CD14-positive monocyte (primary cell): ENCODE measurements at regions of chr13 and their contacts with region 1.

Region 1: GRCh38 chr13:20127577-20128466 is 33.0 kb downstream of the GJA3 start:
- DNase-seq: peak; percentile 41 to 73 (median 65)
- H3K4me3 ChIP-seq: peak overlapping the region; percentile 30 to 80 (median 43)
- H3K4me3 Mint-ChIP-seq: peak overlapping the region in 1 of 2 donors; percentile 74
- H3K27ac ChIP-seq: peak overlapping the region in 1 of 2 donors; percentile 31
- H3K27ac Mint-ChIP-seq: peak overlapping the region in 6 of 7 donors; percentile 72 to 94 (median 88)
- H3K4me1 ChIP-seq: peaks cover 25 to 32% of the 10 kb centered on the region in 2 donors
- H3K4me1 Mint-ChIP-seq: peaks cover 21% of the 10 kb centered on the region
- H3K27me3 ChIP-seq: peaks cover 16 to 35% of the 10 kb centered on the region in 2 donors
- H3K27me3 Mint-ChIP-seq: peaks cover 10 to 19% (median 10%) of the 10 kb centered on the region in 3 donors
- CTCF ChIP-seq: peak; percentile 55

Region 2: GRCh38 chr13:20073775-20074174 is 54.0 kb before region 1 on chr13:
- intact Hi-C with region 1: loop called in 1 of 2 experiments (anchors 10 kb)
- DNase-seq: peak; percentile 35 to 57 (median 50)
- H3K4me3 ChIP-seq: peak overlapping the region in 1 of 3 experiments; percentile 51
- H3K4me3 Mint-ChIP-seq: peak overlapping the region in 1 of 2 donors; percentile 42
- H3K27ac ChIP-seq: peak overlapping the region; percentile 62 to 73
- H3K27ac Mint-ChIP-seq: peak overlapping the region; percentile 52 to 85 (median 75)
- H3K4me1 ChIP-seq: peaks cover 19 to 24% of the 10 kb centered on the region in 2 donors
- H3K4me1 Mint-ChIP-seq: peaks cover 39% of the 10 kb centered on the region
- H3K27me3 ChIP-seq: no peaks in the 10 kb centered on the region
- H3K27me3 Mint-ChIP-seq: peaks cover 0 to 1% (median 0%) of the 10 kb centered on the region in 3 donors
- CTCF ChIP-seq: no peak

Region 3: DNA sequence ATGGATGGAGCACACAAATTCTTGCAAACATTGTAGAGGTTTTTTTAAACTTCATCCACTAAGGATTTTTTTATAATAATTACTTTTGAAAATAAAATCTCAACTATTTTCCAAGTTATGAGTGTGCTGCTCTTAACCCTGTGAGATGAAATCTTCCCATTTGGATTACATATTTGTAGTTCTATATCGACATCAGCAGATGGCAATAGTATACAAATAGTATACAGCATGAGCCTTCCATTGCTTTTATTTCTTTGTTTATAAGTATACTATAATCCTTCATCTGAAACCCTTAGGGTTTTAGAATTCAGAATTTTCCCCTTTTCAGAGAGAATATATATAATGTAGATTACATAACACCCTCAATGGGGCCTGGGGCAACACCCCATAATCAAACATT is 37.5 kb before region 1 on chr13:
- intact Hi-C with region 1: loop called in 1 of 2 experiments (anchors 5 kb)
- DNase-seq: no peak
- H3K4me3 ChIP-seq: no peak overlapping the region
- H3K4me3 Mint-ChIP-seq: no peak overlapping the region
- H3K27ac ChIP-seq: no peak overlapping the region
- H3K27ac Mint-ChIP-seq: no peak overlapping the region
- H3K4me1 ChIP-seq: no peaks in the 10 kb centered on the region
- H3K4me1 Mint-ChIP-seq: no peaks in the 10 kb centered on the region
- H3K27me3 ChIP-seq: peaks cover 6 to 17% of the 10 kb centered on the region in 2 donors
- H3K27me3 Mint-ChIP-seq: peaks cover 6 to 11% (median 9%) of the 10 kb centered on the region in 3 donors
- CTCF ChIP-seq: peak; percentile 37

Region 4: DNA sequence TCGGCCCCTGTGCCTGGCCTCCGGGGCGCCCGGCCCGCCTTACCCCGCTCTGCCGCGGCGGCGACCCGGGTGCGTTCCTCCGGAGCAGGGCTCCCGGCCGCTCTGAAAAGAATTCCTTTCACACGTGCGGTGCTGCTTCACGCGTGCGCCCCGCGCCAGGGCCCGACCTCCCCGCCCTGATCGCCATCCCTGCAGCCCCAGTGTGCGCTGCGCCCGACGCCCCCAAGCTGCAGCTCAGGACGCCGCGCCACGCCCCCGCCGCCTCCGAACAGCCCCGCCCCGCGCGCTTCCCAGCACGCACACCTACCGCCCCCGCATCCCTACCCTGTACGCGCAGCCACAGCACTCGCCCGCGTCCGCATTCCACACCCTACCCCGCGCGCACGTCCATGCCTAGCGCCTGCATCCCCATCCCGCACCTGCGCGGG is 33.0 kb after region 1 on chr13 and contains the start of gene GJA3:
- intact Hi-C with region 1: loop called in 1 of 2 experiments (anchors 5 kb)
- DNase-seq: no peak
- H3K4me3 ChIP-seq: peak within 1 kb of the TSS in 2 of 3 experiments; percentile 30 to 66
- H3K4me3 Mint-ChIP-seq: peak within 1 kb of the TSS; percentile 77 to 90
- H3K27ac ChIP-seq: no peak within 1 kb of the TSS
- H3K27ac Mint-ChIP-seq: peak within 1 kb of the TSS in 1 of 7 donors; percentile 68
- H3K4me1 ChIP-seq: peaks cover 13 to 23% of the 10 kb centered on the region in 2 donors
- H3K4me1 Mint-ChIP-seq: peaks cover 24% of the 10 kb centered on the region
- H3K27me3 ChIP-seq: peaks cover 67 to 73% of the 10 kb centered on the region in 2 donors
- H3K27me3 Mint-ChIP-seq: peaks cover 57 to 76% (median 68%) of the 10 kb centered on the region in 3 donors
- CTCF ChIP-seq: no peak
- polyA plus RNA-seq, gene GJA3: not detected

Region 5: DNA sequence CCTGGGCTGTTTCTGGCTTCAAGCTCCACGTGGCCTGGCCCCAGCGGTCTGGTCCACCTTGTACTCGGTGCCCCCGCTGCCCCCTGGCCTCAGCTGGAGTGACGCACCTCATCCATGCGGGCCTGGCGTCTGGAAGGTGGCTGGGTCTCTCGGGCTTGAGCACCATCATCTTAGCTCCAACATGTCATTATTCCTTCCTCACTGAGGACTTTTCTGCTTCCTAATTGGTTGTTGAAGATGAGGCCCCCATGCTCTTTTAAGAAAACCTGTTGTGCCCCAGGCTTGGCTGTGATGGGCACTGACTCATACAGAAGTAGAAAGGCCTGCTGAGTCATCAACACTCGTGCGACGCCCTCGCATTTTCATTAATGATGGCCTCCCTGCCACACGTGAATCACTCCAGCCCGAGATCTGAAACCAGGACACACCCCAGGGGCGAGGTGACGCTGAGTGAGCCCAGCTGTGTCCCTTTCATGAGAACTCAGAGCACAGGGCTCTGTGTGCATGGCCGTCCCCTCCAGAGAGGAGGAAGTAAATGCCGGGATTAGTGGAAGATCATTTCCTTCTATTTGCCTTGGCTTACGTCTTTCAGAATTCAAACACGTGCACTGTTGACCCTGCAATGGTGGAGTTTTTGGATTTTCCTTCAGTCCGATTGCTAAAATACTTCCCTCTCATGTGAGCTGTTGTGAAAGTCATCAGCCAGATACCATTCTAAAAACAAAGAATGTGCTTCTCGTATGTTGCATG is 47.0 kb after region 1 on chr13:
- intact Hi-C with region 1: loop called in 1 of 2 experiments (anchors 10 kb)
- DNase-seq: peak; percentile 94 to 100 (median 95)
- H3K4me3 ChIP-seq: peak overlapping the region in 2 of 3 experiments; percentile 9 to 56
- H3K4me3 Mint-ChIP-seq: peak overlapping the region; percentile 58 to 80
- H3K27ac ChIP-seq: peak overlapping the region; percentile 49 to 89
- H3K27ac Mint-ChIP-seq: peak overlapping the region; percentile 83 to 98 (median 93)
- H3K4me1 ChIP-seq: peaks cover 17 to 62% of the 10 kb centered on the region in 2 donors
- H3K4me1 Mint-ChIP-seq: peaks cover 76% of the 10 kb centered on the region
- H3K27me3 ChIP-seq: peaks cover 29 to 37% of the 10 kb centered on the region in 2 donors
- H3K27me3 Mint-ChIP-seq: peaks cover 37 to 54% (median 47%) of the 10 kb centered on the region in 3 donors
- CTCF ChIP-seq: no peak

Region 6: DNA sequence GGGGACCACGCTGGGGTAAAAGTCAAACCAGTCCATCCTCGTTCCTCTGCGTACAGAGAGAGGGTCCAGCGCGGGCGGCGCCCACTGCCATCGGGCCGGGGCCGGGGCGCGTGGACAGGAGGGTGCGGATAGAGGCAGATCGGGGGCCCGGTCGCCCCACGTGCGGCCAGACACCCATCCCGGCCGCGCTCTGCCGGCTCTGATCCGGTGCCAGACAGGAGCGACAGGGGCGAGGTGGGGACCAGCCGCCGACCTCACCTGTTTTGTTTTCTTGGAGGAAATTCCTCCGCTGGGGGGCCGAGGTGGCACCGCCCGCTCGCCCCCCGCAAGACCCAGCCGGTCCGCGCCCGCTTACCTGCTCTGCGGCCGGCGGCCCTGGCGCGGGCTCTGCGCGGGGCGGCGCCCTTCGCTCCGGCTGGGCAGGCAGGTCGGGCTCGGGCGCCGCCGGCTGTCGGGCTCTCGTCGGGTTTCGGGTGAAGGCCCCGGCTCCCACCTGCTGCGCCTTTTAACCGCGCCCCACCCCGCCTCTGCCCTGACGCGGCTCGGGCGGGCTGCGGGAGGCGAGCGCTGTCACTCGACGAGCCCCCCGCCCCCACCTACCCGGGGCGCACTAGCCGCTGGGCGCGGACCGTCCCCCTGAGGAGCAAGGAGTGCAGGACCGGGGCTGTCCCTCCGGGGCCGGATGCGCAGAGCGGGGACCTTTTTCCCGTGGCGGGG is 104.2 kb after region 1 on chr13 and contains the start of gene GJB6:
- intact Hi-C with region 1: no loop called
- DNase-seq: no peak
- H3K4me3 ChIP-seq: peak within 1 kb of the TSS; percentile 10 to 71 (median 24)
- H3K4me3 Mint-ChIP-seq: peak within 1 kb of the TSS; percentile 80 to 94
- H3K27ac ChIP-seq: no peak within 1 kb of the TSS
- H3K27ac Mint-ChIP-seq: peak within 1 kb of the TSS in 2 of 7 donors; percentile 13 to 62
- H3K4me1 ChIP-seq: peaks cover 18% of the 10 kb centered on the region in 2 donors
- H3K4me1 Mint-ChIP-seq: peaks cover 18% of the 10 kb centered on the region
- H3K27me3 ChIP-seq: peaks cover 35 to 51% of the 10 kb centered on the region in 2 donors
- H3K27me3 Mint-ChIP-seq: peaks cover 41 to 58% (median 46%) of the 10 kb centered on the region in 3 donors
- CTCF ChIP-seq: no peak
- polyA plus RNA-seq, gene GJB6: 0.32 TPM in 1 of 3 donors, not detected in the others

Region 7: DNA sequence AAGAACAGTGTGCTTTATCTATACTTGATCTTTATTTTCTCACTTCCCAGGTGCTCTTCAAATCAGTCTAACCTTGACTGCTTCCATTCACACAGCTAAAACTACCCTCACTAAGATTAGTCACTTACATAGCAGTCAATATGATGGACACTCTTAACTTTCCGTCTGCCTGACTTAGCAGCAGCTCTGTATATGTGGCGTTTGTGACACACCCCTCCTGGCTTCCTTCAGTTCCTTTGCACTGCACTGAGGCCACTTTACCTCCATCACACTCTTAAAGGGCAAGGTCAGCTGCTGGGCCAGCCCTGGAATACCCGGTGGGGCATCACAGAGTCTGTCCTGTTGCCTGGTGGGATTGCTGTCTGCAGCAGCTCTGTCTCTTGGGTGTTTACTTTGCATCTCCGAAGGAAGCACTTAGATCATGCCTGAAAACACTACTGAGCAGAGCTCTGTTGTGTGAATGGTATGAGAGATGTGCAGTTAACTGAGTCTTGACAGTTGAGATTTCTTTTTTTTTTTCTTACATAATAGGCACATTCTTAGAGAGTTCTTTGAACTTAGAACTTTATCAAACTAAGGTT is 540.1 kb after region 1 on chr13:
- intact Hi-C with region 1: no loop called
- DNase-seq: no peak
- H3K4me3 ChIP-seq: no peak overlapping the region
- H3K4me3 Mint-ChIP-seq: no peak overlapping the region
- H3K27ac ChIP-seq: no peak overlapping the region
- H3K27ac Mint-ChIP-seq: no peak overlapping the region
- H3K4me1 ChIP-seq: no peaks in the 10 kb centered on the region
- H3K4me1 Mint-ChIP-seq: no peaks in the 10 kb centered on the region
- H3K27me3 ChIP-seq: no peaks in the 10 kb centered on the region
- H3K27me3 Mint-ChIP-seq: peaks cover 0 to 1% (median 0%) of the 10 kb centered on the region in 3 donors
- CTCF ChIP-seq: no peak